Activated CD4-positive, alpha-beta T cell treated with anti-CD3 and anti-CD28 coated beads for 36 hours (primary cell): ENCODE measurements at regions of chr7 and their contacts with region 1.

Region 1: DNA sequence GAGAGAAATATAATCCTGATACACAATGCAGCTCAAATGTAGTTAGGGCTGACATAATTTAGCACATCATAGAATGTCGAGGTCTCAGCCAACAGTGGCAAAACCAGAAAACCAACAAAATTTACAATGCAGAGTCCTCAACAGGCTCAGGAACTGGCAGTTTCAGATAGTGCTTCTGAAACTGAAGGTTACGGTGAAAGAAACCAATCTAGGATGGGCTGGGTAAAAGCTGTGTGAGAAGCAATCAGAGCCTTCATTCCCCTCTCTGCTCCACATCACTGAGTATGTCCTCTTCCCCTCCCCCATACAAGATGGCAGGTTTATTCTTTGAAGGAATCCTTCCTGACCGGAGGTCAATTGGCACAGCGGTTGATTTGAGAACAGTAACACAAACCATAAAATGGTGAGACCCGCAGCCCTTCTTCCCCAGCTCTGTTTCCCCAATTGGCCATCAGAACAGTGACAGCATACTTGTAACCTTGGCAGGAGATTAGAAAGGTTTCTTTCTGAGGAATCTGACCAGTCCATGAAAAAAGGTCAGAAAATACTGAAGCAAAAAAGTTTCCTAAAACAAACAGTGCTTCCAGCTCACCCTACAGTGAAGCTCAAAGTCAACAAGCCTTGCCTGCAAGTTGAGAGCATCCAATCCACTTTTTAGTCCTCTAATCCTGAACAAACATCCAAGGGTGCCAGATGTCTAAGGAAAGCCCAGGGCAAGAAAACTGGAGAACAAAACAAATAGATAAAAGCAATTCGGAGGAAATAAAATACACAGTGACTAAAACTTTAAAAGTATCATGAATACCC is 54.0 kb upstream of the IL6 start:
- DNase-seq: no peak
- ATAC-seq: no peak
- H3K4me3 Mint-ChIP-seq: no peak overlapping the region
- H3K27ac Mint-ChIP-seq: no peak overlapping the region
- H3K4me1 Mint-ChIP-seq: peaks cover 56% of the 10 kb centered on the region
- H3K27me3 Mint-ChIP-seq: peaks cover 1% of the 10 kb centered on the region

Region 2: GRCh38 chr7:21939136-21939857 is 733.8 kb before region 1 on chr7:
- CTCF ChIA-PET with region 1: no interaction called
- POLR2A ChIA-PET with region 1: interaction called, 6 read pairs
- intact Hi-C with region 1: loop called in 1 of 2 experiments (anchors 10 kb)
- DNase-seq: peak; percentile 82
- ATAC-seq: peak; percentile 82
- H3K4me3 Mint-ChIP-seq: peak overlapping the region; percentile 53
- H3K27ac Mint-ChIP-seq: peak overlapping the region; percentile 92
- H3K4me1 Mint-ChIP-seq: peaks cover 74% of the 10 kb centered on the region
- H3K27me3 Mint-ChIP-seq: peaks cover 2% of the 10 kb centered on the region

Region 3: GRCh38 chr7:22565315-22565811 is 107.7 kb before region 1 on chr7:
- CTCF ChIA-PET with region 1: interaction called, 3 read pairs
- POLR2A ChIA-PET with region 1: no interaction called
- intact Hi-C with region 1: loop called (anchors 2 to 5 kb)
- DNase-seq: no peak
- ATAC-seq: no peak
- H3K4me3 Mint-ChIP-seq: no peak overlapping the region
- H3K27ac Mint-ChIP-seq: no peak overlapping the region
- H3K4me1 Mint-ChIP-seq: peaks cover 49% of the 10 kb centered on the region
- H3K27me3 Mint-ChIP-seq: peaks cover 54% of the 10 kb centered on the region

Region 4: GRCh38 chr7:22607180-22607579 is 65.9 kb before region 1 on chr7:
- CTCF ChIA-PET with region 1: no interaction called
- POLR2A ChIA-PET with region 1: no interaction called
- intact Hi-C with region 1: no loop called
- DNase-seq: no peak
- ATAC-seq: no peak
- H3K4me3 Mint-ChIP-seq: no peak overlapping the region
- H3K27ac Mint-ChIP-seq: no peak overlapping the region
- H3K4me1 Mint-ChIP-seq: no peaks in the 10 kb centered on the region
- H3K27me3 Mint-ChIP-seq: peaks cover 19% of the 10 kb centered on the region

Region 5: GRCh38 chr7:22660732-22661131 is 12.3 kb before region 1 on chr7:
- CTCF ChIA-PET with region 1: interaction called, 4 read pairs
- POLR2A ChIA-PET with region 1: interaction called, 4 read pairs
- intact Hi-C with region 1: loop called (anchors 1 kb)
- DNase-seq: no peak
- ATAC-seq: no peak
- H3K4me3 Mint-ChIP-seq: no peak overlapping the region
- H3K27ac Mint-ChIP-seq: no peak overlapping the region
- H3K4me1 Mint-ChIP-seq: peaks cover 33% of the 10 kb centered on the region
- H3K27me3 Mint-ChIP-seq: peaks cover 20% of the 10 kb centered on the region

Region 6: GRCh38 chr7:22726345-22727185 is 53.5 kb after region 1 on chr7:
- CTCF ChIA-PET with region 1: interaction called, 11 read pairs
- POLR2A ChIA-PET with region 1: no interaction called
- intact Hi-C with region 1: no loop called
- DNase-seq: peak; percentile 79
- ATAC-seq: peak; percentile 92
- H3K4me3 Mint-ChIP-seq: peak overlapping the region; percentile 51
- H3K27ac Mint-ChIP-seq: peak overlapping the region; percentile 61
- H3K4me1 Mint-ChIP-seq: peaks cover 28% of the 10 kb centered on the region
- H3K27me3 Mint-ChIP-seq: peaks cover 31% of the 10 kb centered on the region